Naive thymus-derived CD4-positive, alpha-beta T cell (primary cell): ENCODE measurements at regions of chr3 and their contacts with region 1.

Region 1: DNA sequence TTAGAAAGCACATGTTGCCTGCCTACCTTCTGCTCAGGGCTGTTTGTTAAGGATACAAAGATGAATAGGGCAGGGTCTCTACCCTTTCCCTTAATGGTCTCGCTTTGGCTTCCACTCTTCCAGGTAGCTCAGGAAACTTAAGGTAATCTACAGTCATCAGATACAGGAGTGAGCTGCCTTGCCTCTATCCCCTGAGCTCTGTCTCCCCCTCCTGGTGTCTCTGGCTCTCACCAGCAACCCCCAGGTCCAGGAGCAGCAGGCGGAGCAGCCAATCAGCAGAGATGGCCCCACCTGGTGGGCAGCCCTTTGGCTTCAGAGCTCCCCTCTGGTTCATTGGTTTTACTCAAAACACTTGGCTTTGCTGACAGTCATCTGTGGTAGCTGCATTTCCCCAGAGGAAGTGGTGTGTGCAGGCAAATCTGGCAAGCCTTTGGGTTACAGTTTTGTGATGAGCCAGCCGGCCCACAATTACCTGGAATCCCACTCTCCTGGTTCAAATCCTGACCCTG is 8.5 kb upstream of the CX3CR1 start:
- DNase-seq: peak; percentile 49 to 77 (median 71)
- ATAC-seq: peak; percentile 97
- H3K4me3 ChIP-seq: no peak overlapping the region
- H3K4me3 Mint-ChIP-seq: peak overlapping the region in 1 of 10 donors; percentile 3
- H3K27ac ChIP-seq: no peak overlapping the region
- H3K27ac Mint-ChIP-seq: peak overlapping the region in 2 of 9 donors; percentile 7 to 66
- H3K4me1 ChIP-seq: peaks cover 0 to 4% of the 10 kb centered on the region in 2 donors
- H3K4me1 Mint-ChIP-seq: peaks cover 7 to 62% (median 17%) of the 10 kb centered on the region in 7 donors
- H3K27me3 ChIP-seq: no peaks in the 10 kb centered on the region
- H3K27me3 Mint-ChIP-seq: no peaks in the 10 kb centered on the region

Region 2: GRCh38 chr3:38521391-38521987 is 766.9 kb before region 1 on chr3:
- CTCF ChIA-PET with region 1: interaction called, 8 read pairs
- POLR2A ChIA-PET with region 1: no interaction called
- intact Hi-C with region 1: loop called (anchors 2 to 5 kb)
- DNase-seq: peak in 8 of 9 donors; percentile 34 to 66 (median 58)
- ATAC-seq: peak; percentile 83
- H3K4me3 ChIP-seq: no peak overlapping the region
- H3K4me3 Mint-ChIP-seq: peak overlapping the region in 1 of 10 donors; percentile 12
- H3K27ac ChIP-seq: no peak overlapping the region
- H3K27ac Mint-ChIP-seq: peak overlapping the region in 4 of 9 donors; percentile 2 to 92 (median 35)
- H3K4me1 ChIP-seq: peaks cover 21 to 30% of the 10 kb centered on the region in 2 donors
- H3K4me1 Mint-ChIP-seq: peaks cover 12 to 45% (median 35%) of the 10 kb centered on the region in 7 donors
- H3K27me3 ChIP-seq: no peaks in the 10 kb centered on the region
- H3K27me3 Mint-ChIP-seq: no peaks in the 10 kb centered on the region

Region 3: GRCh38 chr3:39101022-39101689 is 187.2 kb before region 1 on chr3:
- CTCF ChIA-PET with region 1: interaction called, 21 read pairs
- POLR2A ChIA-PET with region 1: interaction called, 3 read pairs
- intact Hi-C with region 1: loop called (anchors 1 kb)
- DNase-seq: peak in 6 of 9 donors; percentile 29 to 56 (median 42)
- ATAC-seq: peak; percentile 78
- H3K4me3 ChIP-seq: no peak overlapping the region
- H3K4me3 Mint-ChIP-seq: no peak overlapping the region
- H3K27ac ChIP-seq: peak overlapping the region; percentile 30
- H3K27ac Mint-ChIP-seq: peak overlapping the region in 7 of 9 donors; percentile 34 to 88 (median 52)
- H3K4me1 ChIP-seq: peaks cover under 1 to 2% of the 10 kb centered on the region in 2 donors
- H3K4me1 Mint-ChIP-seq: peaks cover 28 to 47% (median 37%) of the 10 kb centered on the region in 7 donors
- H3K27me3 ChIP-seq: no peaks in the 10 kb centered on the region
- H3K27me3 Mint-ChIP-seq: peaks cover 0 to 1% (median 0%) of the 10 kb centered on the region in 5 donors

Region 4: DNA sequence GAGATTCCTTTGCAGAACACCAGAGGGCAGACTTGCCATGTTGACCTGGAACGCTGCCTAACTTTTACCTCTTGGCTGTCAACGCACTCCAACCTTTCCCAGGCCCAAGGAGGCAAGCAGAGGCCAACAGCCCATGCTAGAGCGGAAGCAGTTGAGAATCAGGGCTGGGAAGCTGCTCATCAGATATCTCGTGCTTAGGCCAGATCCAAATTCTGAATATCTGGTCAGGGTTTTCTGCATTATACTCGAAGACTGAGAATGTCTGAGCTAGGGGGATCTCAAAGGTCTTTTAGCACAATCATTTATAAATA is 98.4 kb before region 1 on chr3:
- CTCF ChIA-PET with region 1: interaction called, 45 read pairs
- POLR2A ChIA-PET with region 1: interaction called, 4 read pairs
- intact Hi-C with region 1: loop called (anchors 1 kb)
- DNase-seq: peak; percentile 26 to 63 (median 55)
- ATAC-seq: peak; percentile 80
- H3K4me3 ChIP-seq: no peak overlapping the region
- H3K4me3 Mint-ChIP-seq: no peak overlapping the region
- H3K27ac ChIP-seq: no peak overlapping the region
- H3K27ac Mint-ChIP-seq: peak overlapping the region in 6 of 9 donors; percentile 1 to 79 (median 29)
- H3K4me1 ChIP-seq: peaks cover 0 to 5% of the 10 kb centered on the region in 2 donors
- H3K4me1 Mint-ChIP-seq: peaks cover 4 to 18% (median 6%) of the 10 kb centered on the region in 7 donors
- H3K27me3 ChIP-seq: no peaks in the 10 kb centered on the region
- H3K27me3 Mint-ChIP-seq: no peaks in the 10 kb centered on the region

Region 5: GRCh38 chr3:39267631-39268548 is 20.5 kb before region 1 on chr3:
- CTCF ChIA-PET with region 1: interaction called, 3 read pairs
- POLR2A ChIA-PET with region 1: no interaction called
- intact Hi-C with region 1: loop called in 1 of 2 experiments (anchors 1 kb)
- DNase-seq: peak in 8 of 9 donors; percentile 11 to 74 (median 30)
- ATAC-seq: peak; percentile 92
- H3K4me3 ChIP-seq: no peak overlapping the region
- H3K4me3 Mint-ChIP-seq: peak overlapping the region in 6 of 10 donors; percentile 20 to 81 (median 26)
- H3K27ac ChIP-seq: no peak overlapping the region
- H3K27ac Mint-ChIP-seq: peak overlapping the region in 8 of 9 donors; percentile 6 to 99 (median 71)
- H3K4me1 ChIP-seq: peaks cover 11 to 62% of the 10 kb centered on the region in 2 donors
- H3K4me1 Mint-ChIP-seq: peaks cover 7 to 56% (median 14%) of the 10 kb centered on the region in 7 donors
- H3K27me3 ChIP-seq: no peaks in the 10 kb centered on the region
- H3K27me3 Mint-ChIP-seq: peaks cover 0 to 9% (median 0%) of the 10 kb centered on the region in 5 donors

Region 6: DNA sequence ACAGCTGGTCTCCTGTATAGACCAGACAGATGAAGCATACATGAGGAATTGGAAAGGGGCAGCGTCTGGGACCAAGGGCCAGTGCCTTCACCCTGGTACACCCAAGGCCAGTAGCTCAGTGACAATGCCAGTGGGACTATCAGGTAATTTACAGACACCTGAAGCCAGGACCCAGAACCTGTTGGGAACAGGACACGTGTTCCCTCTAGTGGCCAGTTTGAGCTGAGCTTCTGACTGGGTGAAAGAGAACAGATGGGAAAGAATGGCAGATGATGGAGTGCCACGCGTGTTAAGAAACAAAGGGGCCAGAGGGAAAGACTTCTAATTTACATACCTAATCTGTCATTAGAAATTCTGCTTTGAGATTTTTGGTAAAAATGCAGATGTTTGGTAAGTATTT is 89.7 kb after region 1 on chr3:
- CTCF ChIA-PET with region 1: interaction called, 13 read pairs
- POLR2A ChIA-PET with region 1: no interaction called
- intact Hi-C with region 1: loop called (anchors 1 kb)
- DNase-seq: peak in 8 of 9 donors; percentile 32 to 68 (median 62)
- ATAC-seq: peak; percentile 86
- H3K4me3 ChIP-seq: no peak overlapping the region
- H3K4me3 Mint-ChIP-seq: no peak overlapping the region
- H3K27ac ChIP-seq: no peak overlapping the region
- H3K27ac Mint-ChIP-seq: no peak overlapping the region
- H3K4me1 ChIP-seq: peaks cover 6% of the 10 kb centered on the region in 2 donors
- H3K4me1 Mint-ChIP-seq: peaks cover 0 to 20% (median 13%) of the 10 kb centered on the region in 7 donors
- H3K27me3 ChIP-seq: no peaks in the 10 kb centered on the region
- H3K27me3 Mint-ChIP-seq: peaks cover 0 to 3% (median 0%) of the 10 kb centered on the region in 5 donors